Activated CD4-positive, alpha-beta T cell treated with anti-CD3 and anti-CD28 coated beads, Interleukin-2, amount 10 ng/mL, durations not matched to agents 24 days and 14 days (primary cell): ENCODE measurements at regions of chr10 and their contacts with region 1.

Region 1: GRCh38 chr10:62992145-62992721 is 140.9 kb upstream of the NRBF2 start:
- DNase-seq: no peak
- H3K4me3 Mint-ChIP-seq: peak overlapping the region; percentile 62
- H3K27ac Mint-ChIP-seq: peak overlapping the region; percentile 91
- H3K4me1 Mint-ChIP-seq: peaks cover 54% of the 10 kb centered on the region
- H3K27me3 Mint-ChIP-seq: no peaks in the 10 kb centered on the region

Region 2: GRCh38 chr10:62471711-62472110 is 520.5 kb before region 1 on chr10:
- intact Hi-C with region 1: no loop called
- DNase-seq: no peak
- H3K4me3 Mint-ChIP-seq: no peak overlapping the region
- H3K27ac Mint-ChIP-seq: no peak overlapping the region
- H3K4me1 Mint-ChIP-seq: no peaks in the 10 kb centered on the region
- H3K27me3 Mint-ChIP-seq: peaks cover 3% of the 10 kb centered on the region

Region 3: DNA sequence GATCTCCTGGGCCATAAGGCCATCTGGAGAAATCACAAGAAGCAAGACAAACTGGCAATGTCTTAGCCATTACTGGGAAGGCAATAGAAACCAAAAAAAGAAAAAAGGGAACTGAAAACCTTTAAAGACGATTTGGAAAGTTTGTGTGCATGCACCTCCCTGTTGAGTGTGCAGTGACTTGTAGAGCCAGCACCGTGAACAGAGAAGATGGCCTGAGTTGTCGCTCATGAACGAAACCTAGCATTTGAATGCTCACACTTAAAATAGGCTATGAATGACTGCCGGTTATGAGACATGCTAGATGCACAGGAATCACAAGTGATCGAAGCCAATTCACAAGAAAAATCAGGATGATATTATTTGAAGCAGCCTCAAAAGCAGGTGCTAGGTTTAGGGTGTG is 339.0 kb before region 1 on chr10:
- intact Hi-C with region 1: no loop called
- DNase-seq: no peak
- H3K4me3 Mint-ChIP-seq: no peak overlapping the region
- H3K27ac Mint-ChIP-seq: no peak overlapping the region
- H3K4me1 Mint-ChIP-seq: peaks cover 32% of the 10 kb centered on the region
- H3K27me3 Mint-ChIP-seq: no peaks in the 10 kb centered on the region

Region 4: DNA sequence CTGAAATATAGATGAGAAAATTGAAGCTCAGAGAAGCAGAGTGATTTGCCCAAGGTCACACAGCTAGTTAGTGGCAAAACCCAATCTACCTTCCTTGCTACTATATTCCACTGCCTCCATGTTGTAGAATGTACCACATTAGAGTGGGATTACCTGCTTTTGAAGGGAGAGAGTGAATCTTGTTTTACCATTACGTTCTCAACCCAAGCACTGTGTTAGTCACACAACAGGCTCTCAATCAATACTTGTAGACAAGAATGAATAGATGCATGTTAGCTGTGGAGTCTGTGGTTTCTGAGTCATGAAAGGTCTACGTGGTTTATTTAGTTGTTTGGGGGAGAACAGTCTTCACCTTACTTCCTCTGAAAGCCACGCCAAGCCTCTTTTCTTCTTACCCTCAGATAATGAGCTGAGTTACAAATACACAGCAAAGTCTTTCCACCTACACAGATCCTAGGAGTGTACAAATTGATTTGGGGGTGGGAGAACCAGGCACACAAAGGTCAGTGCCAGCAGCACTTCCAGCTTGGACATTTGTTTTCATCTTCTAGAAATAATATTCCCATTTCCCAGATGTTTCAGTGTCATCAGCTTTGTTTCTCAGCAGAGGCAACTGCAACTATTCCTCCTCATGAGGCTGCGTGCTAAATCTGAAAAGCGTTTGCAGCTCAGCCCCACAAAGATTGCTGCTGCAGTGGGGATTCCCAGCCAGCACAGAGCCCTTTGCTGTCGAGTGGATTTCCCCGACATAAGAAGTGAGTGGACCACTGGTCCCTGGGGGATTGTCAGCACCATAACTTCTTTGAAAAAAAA is 259.2 kb before region 1 on chr10:
- intact Hi-C with region 1: loop called (anchors 1 kb)
- DNase-seq: peak; percentile 91
- H3K4me3 Mint-ChIP-seq: no peak overlapping the region
- H3K27ac Mint-ChIP-seq: no peak overlapping the region
- H3K4me1 Mint-ChIP-seq: peaks cover 43% of the 10 kb centered on the region
- H3K27me3 Mint-ChIP-seq: peaks cover 1% of the 10 kb centered on the region

Region 5: GRCh38 chr10:62851442-62851841 is 140.8 kb before region 1 on chr10:
- intact Hi-C with region 1: loop called (anchors 1 kb)
- DNase-seq: peak; percentile 68
- H3K4me3 Mint-ChIP-seq: no peak overlapping the region
- H3K27ac Mint-ChIP-seq: peak overlapping the region; percentile 3
- H3K4me1 Mint-ChIP-seq: peaks cover 52% of the 10 kb centered on the region
- H3K27me3 Mint-ChIP-seq: no peaks in the 10 kb centered on the region

Region 6: GRCh38 chr10:62980687-62981086 is 11.5 kb before region 1 on chr10:
- intact Hi-C with region 1: loop called (anchors 1 kb)
- DNase-seq: no peak
- H3K4me3 Mint-ChIP-seq: peak overlapping the region; percentile 41
- H3K27ac Mint-ChIP-seq: peak overlapping the region; percentile 94
- H3K4me1 Mint-ChIP-seq: peaks cover 30% of the 10 kb centered on the region
- H3K27me3 Mint-ChIP-seq: peaks cover 2% of the 10 kb centered on the region

Region 7: GRCh38 chr10:63707254-63707910 is 715.1 kb after region 1 on chr10:
- intact Hi-C with region 1: loop called (anchors 10 kb)
- DNase-seq: peak; percentile 63
- H3K4me3 Mint-ChIP-seq: peak overlapping the region; percentile 32
- H3K27ac Mint-ChIP-seq: peak overlapping the region; percentile 63
- H3K4me1 Mint-ChIP-seq: peaks cover 15% of the 10 kb centered on the region
- H3K27me3 Mint-ChIP-seq: no peaks in the 10 kb centered on the region